Activated T-helper 1 cell treated with anti-CD3 and anti-CD28 coated beads, Interleukin-12 subunit alpha, Interleukin-12 subunit beta, Interleukin-2, Interleukin-4 antibody, amounts not matched to agents 30 ng/mL and 10 ng/mL and 1 ng/mL, durations not matched to agents 14 hours and 24 hours and 36 hours (primary cell): ENCODE measurements at regions of chrX and their contacts with region 1.

Region 1: DNA sequence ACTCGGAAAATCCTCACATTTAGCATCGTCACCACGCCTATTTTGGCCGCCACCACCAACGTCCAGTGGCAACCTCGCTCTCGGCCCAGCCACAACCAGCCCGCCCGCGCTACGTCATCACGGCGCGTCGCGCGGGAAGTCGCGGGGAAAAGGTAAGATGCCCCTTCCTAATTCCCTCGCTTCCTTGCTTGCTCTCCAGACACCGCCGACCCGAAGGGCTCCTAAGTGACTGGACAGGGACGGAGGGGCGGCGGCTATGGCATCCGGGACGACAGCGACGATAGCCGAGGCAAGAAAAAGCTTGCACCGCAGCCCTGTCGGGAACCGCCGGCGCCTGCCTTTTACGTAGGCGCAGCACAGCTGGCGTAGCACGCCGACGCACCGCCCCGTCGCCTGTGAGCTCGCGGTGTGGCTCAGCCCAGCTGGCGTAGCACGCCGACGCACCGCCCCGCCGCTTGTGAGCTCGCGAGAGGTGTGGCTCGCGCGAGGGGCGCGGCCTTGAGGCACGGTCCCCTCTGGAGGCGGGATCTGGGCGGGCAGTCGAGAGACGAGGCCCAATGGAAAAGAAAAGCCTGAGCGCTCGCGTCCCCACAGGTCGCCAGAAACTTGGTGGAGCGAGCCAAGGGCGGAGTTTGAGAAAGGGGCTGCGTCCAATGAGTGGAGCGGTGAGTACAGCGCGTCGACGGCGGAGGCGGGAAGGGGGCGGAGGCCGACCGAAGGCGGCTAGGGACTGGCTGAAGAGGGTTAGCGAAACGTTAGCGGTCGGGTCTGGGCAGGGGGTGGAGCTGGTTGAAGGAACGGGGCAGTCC is at the start of gene HDAC6:
- DNase-seq: peak; percentile 94
- H3K4me3 Mint-ChIP-seq: peak within 1 kb of the TSS; percentile 91
- H3K27ac Mint-ChIP-seq: peak within 1 kb of the TSS; percentile 98
- H3K4me1 Mint-ChIP-seq: peaks cover 13% of the 10 kb centered on the region
- H3K27me3 Mint-ChIP-seq: no peaks in the 10 kb centered on the region
- total RNA-seq, gene HDAC6: 44.7 and 56.4 TPM in 2 replicates

Region 2: DNA sequence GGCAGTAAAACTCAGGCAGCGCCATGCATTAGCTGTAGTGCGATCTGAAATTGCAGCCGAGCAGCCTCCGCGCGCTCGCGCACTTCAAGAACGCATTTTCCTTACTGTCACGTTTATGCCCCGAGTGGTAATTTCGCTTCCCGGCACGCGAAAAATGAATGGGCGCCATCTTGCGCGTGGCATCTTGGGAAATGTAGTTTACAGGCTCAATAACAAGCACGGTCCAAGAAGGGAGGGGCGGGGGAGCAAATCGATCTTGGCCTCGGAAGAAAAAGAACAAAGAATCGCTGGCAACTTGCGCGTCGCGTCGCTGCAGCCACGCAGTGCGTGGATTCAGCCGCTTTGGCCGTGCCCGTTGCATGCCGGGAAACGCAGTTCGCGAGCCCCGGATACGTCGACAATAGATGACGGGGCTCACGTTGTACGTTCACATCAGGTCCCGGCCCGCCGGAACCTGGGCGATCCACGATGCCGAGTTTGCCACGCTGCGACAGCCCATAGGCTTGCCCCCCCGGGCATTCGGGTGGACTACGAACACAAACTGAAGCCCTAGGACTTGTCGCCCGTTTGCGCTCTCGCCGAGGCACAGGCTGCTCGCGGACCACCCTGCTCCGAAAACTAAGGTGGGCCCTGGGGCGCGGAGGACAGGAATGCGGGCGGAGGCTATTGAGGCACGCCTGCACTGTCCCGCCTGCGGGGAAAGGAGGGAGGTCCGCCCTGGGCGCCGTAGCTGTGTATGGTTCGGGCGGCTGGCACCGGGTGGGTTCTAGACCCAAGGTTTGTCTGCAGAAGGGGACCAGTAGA is 325.5 kb before region 1 on chrX and contains the start of gene FTSJ1:
- intact Hi-C with region 1: no loop called
- DNase-seq: peak; percentile 86
- H3K4me3 Mint-ChIP-seq: peak within 1 kb of the TSS; percentile 98
- H3K27ac Mint-ChIP-seq: peak within 1 kb of the TSS; percentile 90
- H3K4me1 Mint-ChIP-seq: peaks cover 20% of the 10 kb centered on the region
- H3K27me3 Mint-ChIP-seq: peaks cover 2% of the 10 kb centered on the region
- total RNA-seq, gene FTSJ1: 96.2 and 103 TPM in 2 replicates

Region 3: DNA sequence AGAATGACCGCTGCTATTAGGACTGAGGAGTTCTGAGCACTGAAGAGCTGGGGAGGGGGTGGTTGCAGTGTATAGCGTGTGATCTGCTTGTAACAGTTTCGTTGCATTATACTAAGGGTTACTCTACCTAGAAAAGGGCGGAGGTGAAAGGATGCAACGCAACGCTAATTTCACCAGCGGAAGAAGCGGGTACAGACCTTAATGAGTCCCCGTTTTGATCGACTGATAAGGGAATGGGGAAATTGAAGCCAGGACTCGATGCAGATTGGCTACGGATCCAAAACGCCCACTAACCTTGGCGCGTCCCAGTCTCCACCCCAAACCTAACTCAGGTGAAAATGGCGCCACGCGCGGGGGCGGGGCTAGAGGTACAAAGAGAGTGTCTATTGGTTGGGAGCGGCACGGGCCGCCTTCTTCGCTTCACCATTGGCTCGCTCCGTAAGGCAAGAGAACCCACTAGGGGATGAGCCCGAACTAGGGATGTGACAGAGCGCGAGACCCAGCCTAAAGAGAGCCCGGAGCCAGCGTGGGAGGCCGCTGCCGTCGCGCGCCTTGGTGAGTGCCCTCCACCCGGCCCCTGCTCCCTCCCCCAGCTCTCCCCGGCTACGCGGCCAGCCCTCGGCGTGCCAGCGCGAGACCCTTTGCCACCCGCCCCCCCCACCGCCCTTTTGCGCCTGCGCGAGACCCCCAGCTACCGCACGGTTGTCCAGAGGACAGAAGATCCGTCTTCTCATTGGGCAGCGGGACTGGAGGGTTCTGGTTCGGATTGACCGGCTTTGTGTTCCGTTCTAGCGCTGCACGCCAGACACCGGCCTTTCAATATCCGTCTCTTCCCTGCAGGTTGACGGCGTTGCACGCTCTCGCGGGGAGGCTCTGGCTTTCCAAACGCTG is 279.9 kb before region 1 on chrX and contains the start of gene EBP:
- intact Hi-C with region 1: loop called (anchors 1 kb)
- DNase-seq: peak; percentile 92
- H3K4me3 Mint-ChIP-seq: peak within 1 kb of the TSS; percentile 95
- H3K27ac Mint-ChIP-seq: peak within 1 kb of the TSS; percentile 98
- H3K4me1 Mint-ChIP-seq: peaks cover 34% of the 10 kb centered on the region
- H3K27me3 Mint-ChIP-seq: no peaks in the 10 kb centered on the region
- total RNA-seq, gene EBP: 164 and 178 TPM in 2 replicates

Region 4: GRCh38 chrX:48676106-48676892 is 125.2 kb before region 1 on chrX:
- intact Hi-C with region 1: loop called (anchors 1 kb)
- DNase-seq: peak; percentile 87
- H3K4me3 Mint-ChIP-seq: peak overlapping the region; percentile 86
- H3K27ac Mint-ChIP-seq: peak overlapping the region; percentile 88
- H3K4me1 Mint-ChIP-seq: peaks cover 20% of the 10 kb centered on the region
- H3K27me3 Mint-ChIP-seq: no peaks in the 10 kb centered on the region

Region 5: GRCh38 chrX:48789366-48790220 is 11.9 kb before region 1 on chrX:
- intact Hi-C with region 1: no loop called
- DNase-seq: no peak
- H3K4me3 Mint-ChIP-seq: no peak overlapping the region
- H3K27ac Mint-ChIP-seq: no peak overlapping the region
- H3K4me1 Mint-ChIP-seq: no peaks in the 10 kb centered on the region
- H3K27me3 Mint-ChIP-seq: peaks cover 10% of the 10 kb centered on the region

Region 6: GRCh38 chrX:48839686-48840085 is 38.2 kb after region 1 on chrX:
- intact Hi-C with region 1: no loop called
- DNase-seq: no peak
- H3K4me3 Mint-ChIP-seq: no peak overlapping the region
- H3K27ac Mint-ChIP-seq: no peak overlapping the region
- H3K4me1 Mint-ChIP-seq: peaks cover 3% of the 10 kb centered on the region
- H3K27me3 Mint-ChIP-seq: peaks cover 22% of the 10 kb centered on the region

Region 7: DNA sequence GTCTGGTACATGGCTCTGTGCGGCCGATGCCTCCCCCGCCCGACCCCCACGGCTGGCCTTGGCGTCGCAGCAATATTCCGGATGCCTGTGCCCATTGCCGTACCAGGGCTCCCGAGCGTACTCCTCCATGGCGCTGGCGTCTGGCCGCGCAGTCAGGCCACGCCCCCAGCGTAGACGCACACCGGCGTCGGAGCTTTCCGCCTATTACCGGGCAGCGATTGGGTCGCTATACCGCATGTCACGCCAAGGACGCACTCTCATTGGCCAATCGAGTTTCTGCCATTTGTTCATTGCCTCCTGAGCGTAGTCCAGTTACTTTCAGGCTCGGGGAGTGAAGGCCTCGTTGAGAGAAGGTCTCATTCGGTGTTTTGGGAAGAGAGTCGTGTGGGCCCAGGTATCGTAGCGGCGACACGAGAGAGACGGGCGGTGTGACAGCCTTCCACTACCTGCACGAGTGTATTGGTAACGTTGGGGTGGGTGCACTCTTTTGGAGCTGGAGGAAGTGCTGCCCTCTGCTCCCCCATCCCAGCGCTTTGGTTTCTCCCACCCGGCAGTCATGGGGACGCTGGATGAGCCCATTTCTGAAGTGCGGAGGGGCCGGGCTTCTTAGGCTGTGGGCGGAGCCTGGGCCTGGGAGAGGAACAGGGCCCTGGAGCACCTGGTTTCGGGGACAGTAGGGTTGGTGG is 96.3 kb after region 1 on chrX and contains the starts of genes PQBP1 and TIMM17B:
- intact Hi-C with region 1: loop called (anchors 1 kb)
- DNase-seq: peak; percentile 84
- H3K4me3 Mint-ChIP-seq: peak within 1 kb of the TSS; percentile 97
- H3K27ac Mint-ChIP-seq: peak within 1 kb of the TSS; percentile 100
- H3K4me1 Mint-ChIP-seq: peaks cover 8% of the 10 kb centered on the region
- H3K27me3 Mint-ChIP-seq: no peaks in the 10 kb centered on the region
- total RNA-seq, gene PQBP1: 112 and 119 TPM in 2 replicates
- total RNA-seq, gene TIMM17B: 72.2 and 72.3 TPM in 2 replicates

Region 8: DNA sequence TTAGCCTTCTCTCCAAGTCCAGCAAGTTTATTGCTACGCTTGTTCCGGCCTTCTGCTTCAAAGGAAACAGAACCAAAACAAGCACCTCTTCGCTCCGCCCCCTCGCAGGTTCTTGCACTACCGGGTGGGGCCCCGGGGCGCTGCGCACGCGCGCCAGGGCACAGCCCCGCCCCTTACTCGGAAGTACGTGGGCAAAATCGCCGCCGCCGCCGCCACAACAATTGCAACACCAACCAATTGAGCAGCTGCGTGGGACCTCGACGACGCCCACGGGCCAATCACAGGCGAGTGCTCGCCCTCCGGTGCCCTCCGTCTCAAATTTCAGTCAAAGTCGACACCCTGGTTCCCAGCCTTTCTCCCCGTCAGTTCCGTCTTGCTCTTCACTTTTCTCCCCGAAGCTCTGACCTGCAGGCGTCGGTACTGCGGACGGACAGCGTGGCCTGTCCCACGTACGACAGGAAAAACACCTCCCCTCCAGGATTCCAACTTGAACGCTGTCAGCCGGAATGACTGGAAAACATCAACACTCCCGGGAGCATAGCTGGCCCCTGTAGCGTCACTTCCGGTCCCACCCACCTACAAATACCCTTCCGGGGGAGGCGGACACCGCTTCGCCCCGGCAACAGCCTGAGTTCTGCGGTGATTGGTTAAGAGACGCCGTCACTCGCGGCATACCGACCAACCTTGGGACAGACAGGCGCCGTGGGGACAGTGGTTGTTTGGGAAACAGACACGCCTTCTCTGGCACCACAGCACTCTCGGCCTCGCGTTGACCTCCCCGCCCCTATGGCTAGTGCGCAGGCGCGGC is 156.5 kb after region 1 on chrX:
- intact Hi-C with region 1: loop called (anchors 1 kb)
- DNase-seq: peak; percentile 90
- H3K4me3 Mint-ChIP-seq: peak overlapping the region; percentile 98
- H3K27ac Mint-ChIP-seq: peak overlapping the region; percentile 100
- H3K4me1 Mint-ChIP-seq: peaks cover 33% of the 10 kb centered on the region
- H3K27me3 Mint-ChIP-seq: no peaks in the 10 kb centered on the region

Region 9: GRCh38 chrX:49100704-49101628 is 299.5 kb after region 1 on chrX:
- intact Hi-C with region 1: loop called (anchors 1 kb)
- DNase-seq: peak; percentile 86
- H3K4me3 Mint-ChIP-seq: peak overlapping the region; percentile 90
- H3K27ac Mint-ChIP-seq: peak overlapping the region; percentile 87
- H3K4me1 Mint-ChIP-seq: no peaks in the 10 kb centered on the region
- H3K27me3 Mint-ChIP-seq: no peaks in the 10 kb centered on the region

Region 10: GRCh38 chrX:49191033-49191871 is 389.8 kb after region 1 on chrX:
- intact Hi-C with region 1: loop called (anchors 5 kb)
- DNase-seq: peak; percentile 82
- H3K4me3 Mint-ChIP-seq: peak overlapping the region; percentile 95
- H3K27ac Mint-ChIP-seq: peak overlapping the region; percentile 93
- H3K4me1 Mint-ChIP-seq: peaks cover 24% of the 10 kb centered on the region
- H3K27me3 Mint-ChIP-seq: no peaks in the 10 kb centered on the region